ENCODE measurements at regions of chr10 and their contacts with region 1.

Region 1: GRCh38 chr10:61284222-61284890 is 168.8 kb downstream of the TMEM26 start:
- DNase-seq: no peak
- H3K4me3 Mint-ChIP-seq: no peak overlapping the region
- H3K27ac Mint-ChIP-seq: no peak overlapping the region
- H3K4me1 Mint-ChIP-seq: peaks cover 44% of the 10 kb centered on the region
- H3K27me3 Mint-ChIP-seq: peaks cover 12% of the 10 kb centered on the region

Region 2: DNA sequence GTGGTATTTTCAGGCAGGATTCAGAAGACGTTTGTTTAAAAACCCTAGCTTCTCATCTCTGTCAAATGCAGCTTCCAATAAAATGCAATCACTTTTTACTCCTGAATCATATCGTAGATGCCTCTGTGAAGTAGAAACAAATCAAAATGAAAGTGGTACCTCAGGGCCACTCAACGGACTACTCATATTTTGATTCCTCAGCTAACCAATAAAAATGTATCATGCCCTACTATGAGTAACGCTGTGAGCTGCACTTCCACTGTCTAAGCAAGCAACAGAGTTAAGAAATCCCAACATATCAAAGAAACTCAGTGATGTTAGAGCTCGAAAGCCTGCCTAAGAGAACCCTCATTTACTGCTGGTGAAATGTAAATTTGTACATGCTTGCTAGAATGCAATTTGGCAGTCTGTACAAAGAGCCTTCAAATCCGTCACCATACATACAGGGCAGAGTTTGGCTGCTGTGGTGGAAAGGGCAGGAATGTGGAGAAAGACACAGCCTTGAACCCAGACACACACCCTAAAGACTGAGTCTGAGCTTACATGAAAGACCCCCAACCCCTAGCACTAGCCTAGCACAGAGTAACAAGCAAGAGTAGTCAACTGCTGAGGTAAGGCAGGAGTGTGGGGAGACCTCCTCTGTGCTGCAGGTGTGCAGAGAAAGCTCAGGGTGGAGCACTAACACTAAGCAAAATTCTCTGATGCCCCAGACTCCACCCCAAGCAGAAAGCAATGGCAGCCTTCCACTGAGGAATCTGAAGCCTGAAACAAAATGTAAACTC is 1046.2 kb before region 1 on chr10:
- intact Hi-C with region 1: loop called (anchors 5 kb)
- DNase-seq: peak; percentile 24
- H3K4me3 Mint-ChIP-seq: peak overlapping the region; percentile 69
- H3K27ac Mint-ChIP-seq: peak overlapping the region; percentile 66
- H3K4me1 Mint-ChIP-seq: peaks cover 28% of the 10 kb centered on the region
- H3K27me3 Mint-ChIP-seq: no peaks in the 10 kb centered on the region

Region 3: DNA sequence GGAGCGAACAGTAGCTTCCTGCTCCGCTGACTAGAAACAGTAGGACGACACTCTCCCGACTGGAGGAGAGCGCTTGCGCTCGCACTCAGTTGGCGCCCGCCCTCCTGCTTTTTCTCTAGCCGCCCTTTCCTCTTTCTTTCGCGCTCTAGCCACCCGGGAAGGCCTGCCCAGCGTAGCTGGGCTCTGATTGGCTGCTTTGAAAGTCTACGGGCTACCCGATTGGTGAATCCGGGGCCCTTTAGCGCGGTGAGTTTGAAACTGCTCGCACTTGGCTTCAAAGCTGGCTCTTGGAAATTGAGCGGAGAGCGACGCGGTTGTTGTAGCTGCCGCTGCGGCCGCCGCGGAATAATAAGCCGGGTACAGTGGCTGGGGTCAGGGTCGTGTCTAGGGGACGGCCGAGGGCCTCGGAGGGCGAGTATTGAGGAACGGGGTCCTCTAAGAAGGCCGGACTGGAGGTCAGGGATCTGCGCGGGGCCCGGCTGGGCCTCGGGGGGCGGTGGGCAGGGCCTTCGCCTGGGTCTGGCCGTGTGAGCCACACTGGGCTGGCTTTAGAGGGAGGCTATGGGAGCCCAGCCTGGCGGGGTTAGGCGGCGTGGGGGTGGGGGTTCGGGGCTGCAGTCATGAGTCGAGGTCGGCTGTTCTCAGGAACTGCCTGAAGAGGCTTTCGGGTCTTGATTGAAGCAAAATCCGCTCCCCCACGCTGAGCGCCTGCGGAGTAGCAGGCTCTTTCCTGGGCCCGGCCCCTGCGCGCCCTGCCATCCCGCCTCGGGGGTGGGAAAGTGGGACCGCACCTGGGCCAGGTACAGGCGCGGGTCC is 505.9 kb before region 1 on chr10 and contains the start of gene CDK1:
- intact Hi-C with region 1: loop called (anchors 2 kb)
- DNase-seq: peak; percentile 98
- H3K4me3 Mint-ChIP-seq: peak within 1 kb of the TSS; percentile 100
- H3K27ac Mint-ChIP-seq: peak within 1 kb of the TSS; percentile 98
- H3K4me1 Mint-ChIP-seq: peaks cover 38% of the 10 kb centered on the region
- H3K27me3 Mint-ChIP-seq: no peaks in the 10 kb centered on the region
- total RNA-seq, gene CDK1: 89.1 and 91.4 TPM in 2 replicates

Region 4: GRCh38 chr10:60964257-60965235 is 319.8 kb before region 1 on chr10:
- intact Hi-C with region 1: loop called (anchors 5 kb)
- DNase-seq: peak; percentile 19
- H3K4me3 Mint-ChIP-seq: no peak overlapping the region
- H3K27ac Mint-ChIP-seq: no peak overlapping the region
- H3K4me1 Mint-ChIP-seq: peaks cover 26% of the 10 kb centered on the region
- H3K27me3 Mint-ChIP-seq: peaks cover 36% of the 10 kb centered on the region

Region 5: GRCh38 chr10:61244261-61244775 is 40.0 kb before region 1 on chr10:
- intact Hi-C with region 1: no loop called
- DNase-seq: no peak
- H3K4me3 Mint-ChIP-seq: no peak overlapping the region
- H3K27ac Mint-ChIP-seq: no peak overlapping the region
- H3K4me1 Mint-ChIP-seq: no peaks in the 10 kb centered on the region
- H3K27me3 Mint-ChIP-seq: no peaks in the 10 kb centered on the region

Region 6: DNA sequence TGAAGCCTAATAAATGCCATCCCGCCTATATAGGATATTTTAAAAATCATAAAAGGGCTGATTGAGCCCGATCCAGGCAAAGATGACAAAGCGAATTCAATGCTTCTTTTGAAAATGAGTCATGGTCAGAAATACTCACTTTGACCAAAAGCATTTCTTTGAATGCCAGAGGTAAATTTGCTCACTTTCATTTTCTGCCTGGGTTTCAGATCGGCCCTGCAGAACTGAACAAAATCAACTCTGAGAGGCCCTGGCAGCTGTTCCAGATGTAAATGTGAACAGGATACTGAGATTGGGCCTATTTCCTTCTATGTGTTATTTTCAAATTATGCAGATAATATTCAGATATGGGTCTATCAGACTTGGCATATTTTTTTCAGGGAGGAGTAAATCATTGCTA is 502.4 kb after region 1 on chr10:
- intact Hi-C with region 1: loop called (anchors 10 kb)
- DNase-seq: no peak
- H3K4me3 Mint-ChIP-seq: no peak overlapping the region
- H3K27ac Mint-ChIP-seq: no peak overlapping the region
- H3K4me1 Mint-ChIP-seq: peaks cover 56% of the 10 kb centered on the region
- H3K27me3 Mint-ChIP-seq: no peaks in the 10 kb centered on the region

Region 7: GRCh38 chr10:62384057-62384446 is 1099.7 kb after region 1 on chr10:
- intact Hi-C with region 1: loop called (anchors 5 kb)
- DNase-seq: peak; percentile 55
- H3K4me3 Mint-ChIP-seq: no peak overlapping the region
- H3K27ac Mint-ChIP-seq: peak overlapping the region; percentile 60
- H3K4me1 Mint-ChIP-seq: peaks cover 27% of the 10 kb centered on the region
- H3K27me3 Mint-ChIP-seq: peaks cover 54% of the 10 kb centered on the region

Measured in activated T-helper 2 cell treated with anti-CD3 and anti-CD28 coated beads, Interferon-gamma antibody, Interleukin-2, Interleukin-4, amounts not matched to agents 10 μg/mL and 5 μg/mL and 100 μg/mL, durations not matched to agents 14 hours and 24 hours and 36 hours (primary cell).